Cardiac septum (tissue), 1 donor: ENCODE measurements at regions of chr1 and their contacts with region 1.

Region 1: GRCh38 chr1:99481391-99481996 is 164.4 kb upstream of the PALMD start:
- DNase-seq: no peak

Region 2: DNA sequence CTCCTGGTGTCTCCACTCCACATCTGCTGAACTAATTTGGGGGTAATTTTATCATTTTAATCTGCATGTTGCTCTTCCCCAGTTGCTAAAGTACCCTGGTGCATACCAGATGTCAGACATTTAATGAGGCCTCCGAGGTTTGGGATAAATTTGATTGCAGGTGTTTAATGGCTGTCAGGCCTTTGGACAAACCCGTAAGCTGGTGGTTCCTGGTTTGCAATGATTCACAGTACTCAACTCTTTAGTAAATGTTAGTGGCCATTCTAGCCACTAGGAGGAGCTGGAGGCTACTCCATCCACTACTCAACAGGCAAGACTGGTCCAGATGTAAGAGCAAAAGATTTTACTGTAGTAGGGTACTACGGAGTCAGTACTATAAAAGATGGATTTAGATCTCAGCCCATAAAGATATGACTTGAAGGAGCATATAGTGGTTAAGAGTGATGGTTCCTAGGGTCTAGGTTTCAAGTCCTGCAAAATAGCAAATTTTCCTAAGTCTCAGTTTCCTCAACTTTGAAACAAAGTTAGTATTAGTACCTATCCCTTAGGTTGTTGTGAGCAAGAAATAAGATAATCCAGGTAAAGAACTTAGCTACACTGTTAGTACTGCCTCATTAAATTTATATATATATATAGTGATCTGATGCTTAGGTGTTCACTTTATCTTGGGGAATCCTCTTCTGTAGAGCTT is 687.2 kb before region 1 on chr1:
- intact Hi-C with region 1: loop called (anchors 10 kb)
- DNase-seq: no peak

Region 3: DNA sequence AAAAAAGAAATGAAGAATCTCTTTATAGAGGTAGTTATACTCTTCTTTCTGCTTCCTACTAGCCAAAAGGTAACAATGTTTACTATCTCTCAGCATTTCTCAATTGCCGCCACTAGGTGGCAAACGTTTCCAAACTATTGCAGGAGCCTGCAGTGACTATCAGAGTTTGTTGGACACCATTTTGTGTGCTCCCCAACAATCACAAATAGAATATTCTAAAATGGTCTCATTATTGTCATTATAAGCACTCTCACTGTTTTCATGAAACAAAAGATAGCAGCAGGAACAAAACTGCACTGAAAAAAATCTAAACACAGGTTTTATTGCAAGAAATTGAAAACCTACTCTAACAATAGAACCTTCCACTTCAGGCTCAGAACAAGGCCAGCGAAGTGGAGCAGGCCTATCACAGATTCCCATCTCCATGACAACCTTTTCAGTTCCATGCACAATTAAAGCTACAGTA is 301.1 kb before region 1 on chr1:
- intact Hi-C with region 1: loop called (anchors 2 kb)
- DNase-seq: no peak

Region 4: GRCh38 chr1:99279525-99279924 is 202.0 kb before region 1 on chr1:
- intact Hi-C with region 1: no loop called
- DNase-seq: no peak

Region 5: DNA sequence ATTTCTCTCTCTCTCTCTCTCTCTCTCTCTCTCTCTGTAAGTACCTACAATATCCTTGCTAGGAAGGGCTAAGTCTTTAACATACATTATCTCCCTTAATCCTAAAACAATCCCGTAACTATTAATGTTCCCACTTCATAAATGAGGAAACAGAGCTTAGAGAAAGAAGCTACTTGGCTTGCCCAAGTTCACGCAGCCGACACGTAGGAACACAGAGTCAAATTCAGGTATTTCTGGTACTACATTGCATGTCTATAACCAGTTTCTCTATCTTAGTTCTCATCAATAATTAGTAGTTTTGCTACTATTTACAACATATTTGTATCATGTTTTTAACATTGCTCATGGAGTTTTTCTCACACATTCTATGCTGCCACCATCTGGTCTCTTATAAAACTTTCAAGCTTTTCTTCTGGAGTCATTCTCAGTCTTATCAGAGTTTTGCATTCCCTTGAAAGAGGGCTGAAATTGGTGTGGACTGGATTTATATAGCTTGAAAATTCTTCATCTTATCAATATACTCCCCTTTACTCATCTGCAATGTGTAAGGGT is 45.5 kb after region 1 on chr1:
- intact Hi-C with region 1: loop called (anchors 5 kb)
- DNase-seq: no peak

Region 6: GRCh38 chr1:99599678-99600175 is 118.2 kb after region 1 on chr1:
- intact Hi-C with region 1: loop called (anchors 5 kb)
- DNase-seq: no peak

Region 7: DNA sequence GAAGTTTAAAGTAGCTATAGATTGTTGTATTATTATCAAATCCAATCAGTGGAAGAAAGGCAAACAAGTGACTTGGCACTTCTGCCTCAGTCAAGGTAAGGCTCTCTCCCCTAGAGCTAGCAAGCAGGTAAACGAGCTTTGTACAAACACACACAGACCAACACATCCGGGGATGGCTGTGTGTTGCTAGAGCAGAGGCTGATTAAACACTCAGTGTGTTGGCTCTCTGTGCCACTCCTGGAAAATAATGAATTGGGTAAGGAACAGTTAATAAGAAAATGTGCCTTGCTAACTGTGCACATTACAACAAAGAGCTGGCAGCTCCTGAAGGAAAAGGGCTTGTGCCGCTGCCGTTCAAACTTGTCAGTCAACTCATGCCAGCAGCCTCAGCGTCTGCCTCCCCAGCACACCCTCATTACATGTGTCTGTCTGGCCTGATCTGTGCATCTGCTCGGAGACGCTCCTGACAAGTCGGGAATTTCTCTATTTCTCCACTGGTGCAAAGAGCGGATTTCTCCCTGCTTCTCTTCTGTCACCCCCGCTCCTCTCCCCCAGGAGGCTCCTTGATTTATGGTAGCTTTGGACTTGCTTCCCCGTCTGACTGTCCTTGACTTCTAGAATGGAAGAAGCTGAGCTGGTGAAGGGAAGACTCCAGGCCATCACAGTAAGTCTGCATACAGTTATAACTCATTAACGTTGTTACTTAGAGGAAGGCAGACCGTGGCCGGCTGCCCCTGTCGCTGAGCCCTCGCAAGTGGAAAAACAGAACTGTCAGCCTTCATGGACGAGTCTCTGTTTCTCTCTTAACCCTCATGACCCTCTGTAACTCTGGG is 164.4 kb after region 1 on chr1 and contains the start of gene PALMD:
- intact Hi-C with region 1: loop called (anchors 5 kb)
- DNase-seq: peak; percentile 79
- total RNA-seq, gene PALMD: 67.0 TPM